Posterior vena cava (tissue), 2 donors: ENCODE measurements at regions of chr20 and their contacts with region 1.

Region 1: DNA sequence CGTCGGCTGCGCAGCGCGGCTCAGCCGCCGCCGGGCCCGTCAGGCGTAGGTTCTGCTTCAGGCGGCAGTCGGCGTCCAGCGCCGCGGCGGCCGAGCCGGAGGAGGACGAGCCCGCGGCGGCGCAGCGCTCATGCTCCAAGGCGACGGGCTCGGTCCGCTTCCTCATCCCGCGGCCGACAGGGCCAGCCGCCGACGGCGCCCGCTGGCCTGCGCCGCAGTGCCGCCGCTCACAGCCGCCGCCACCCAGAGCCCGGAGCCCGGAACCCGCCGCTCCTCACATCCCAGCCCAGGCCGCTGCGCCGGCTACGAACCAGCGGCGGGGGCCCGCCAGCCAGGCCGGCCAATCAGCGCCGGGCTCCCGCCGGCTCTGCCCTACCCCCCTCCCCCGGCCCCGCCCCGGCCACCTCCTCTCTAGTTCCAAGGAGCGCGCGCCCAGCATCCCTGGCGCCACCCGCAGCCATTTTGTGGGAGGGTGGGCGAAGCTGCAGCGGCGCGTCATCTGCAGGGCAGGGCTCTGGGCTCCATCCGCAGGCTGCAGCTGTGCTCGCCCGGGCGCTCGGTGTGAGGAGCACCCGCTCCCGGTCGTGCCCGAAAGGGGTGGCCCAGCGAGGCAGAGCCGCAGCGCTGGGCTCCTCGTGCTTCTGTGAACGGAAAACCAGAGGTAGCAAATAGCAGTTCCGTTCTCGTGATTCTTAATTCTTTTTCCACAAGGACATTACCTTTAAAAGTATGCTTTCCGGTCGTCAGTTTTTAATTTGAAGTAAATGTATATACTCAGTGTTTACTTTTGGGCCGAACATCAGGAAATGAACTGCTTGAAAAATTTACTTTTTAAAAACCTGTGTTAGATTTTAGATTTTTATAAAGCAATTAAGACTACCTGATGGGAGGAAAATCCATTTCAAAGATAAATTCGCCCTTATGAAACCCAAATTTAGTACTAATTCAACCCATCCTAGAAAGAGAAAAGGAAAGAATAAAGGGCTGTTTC is at the start of gene ABHD12:
- DNase-seq: peak; percentile 99
- total RNA-seq, gene ABHD12: 29.3 to 32.7 TPM

Region 2: GRCh38 chr20:24992487-24993205 is 398.2 kb before region 1 on chr20 and contains the start of gene APMAP:
- intact Hi-C with region 1: loop called (anchors 5 to 10 kb)
- DNase-seq: peak; percentile 99
- total RNA-seq, gene APMAP: 32.7 to 45.6 TPM

Region 3: GRCh38 chr20:25057234-25058050 is 333.4 kb before region 1 on chr20:
- intact Hi-C with region 1: loop called in 1 of 2 experiments (anchors 10 kb)
- DNase-seq: peak; percentile 90

Region 4: GRCh38 chr20:25299806-25300205 is 91.0 kb before region 1 on chr20:
- intact Hi-C with region 1: loop called in 1 of 2 experiments (anchors 5 kb)
- DNase-seq: no peak

Region 5: GRCh38 chr20:25318471-25319240 is 72.2 kb before region 1 on chr20:
- intact Hi-C with region 1: loop called in 1 of 2 experiments (anchors 5 kb)
- DNase-seq: no peak